Adrenal gland (tissue), 19 donors: ENCODE measurements at regions of chr4 and their contacts with region 1.

Region 1: GRCh38 chr4:73258686-73259570 is at the start of gene ANKRD17:
- DNase-seq: peak; percentile 92 to 97 (median 95)
- H3K4me3 ChIP-seq: peak within 1 kb of the TSS; percentile 38 to 98 (median 85)
- H3K27ac ChIP-seq: peak within 1 kb of the TSS; percentile 97 to 99 (median 99)
- H3K4me1 ChIP-seq: peaks cover 24 to 40% of the 10 kb centered on the region in 2 donors
- H3K27me3 ChIP-seq: no peaks in the 10 kb centered on the region
- CTCF ChIP-seq: peak in 5 of 6 experiments; percentile 21 to 57 (median 50)
- POLR2A ChIP-seq: peak; percentile 81 to 94
- total RNA-seq, gene ANKRD17: 37.7 to 66.3 (median 52.8) TPM

Region 2: GRCh38 chr4:73069338-73070073 is 189.4 kb before region 1 on chr4 and contains the start of gene COX18:
- intact Hi-C with region 1: loop called (anchors 10 kb)
- DNase-seq: peak; percentile 97 to 99 (median 98)
- H3K4me3 ChIP-seq: peak within 1 kb of the TSS; percentile 62 to 92 (median 84)
- H3K27ac ChIP-seq: peak within 1 kb of the TSS; percentile 95 to 100 (median 97)
- H3K4me1 ChIP-seq: peaks cover 7 to 15% of the 10 kb centered on the region in 2 donors
- H3K27me3 ChIP-seq: no peaks in the 10 kb centered on the region
- CTCF ChIP-seq: peak in 2 of 6 experiments; percentile 27
- POLR2A ChIP-seq: peak; percentile 87 to 98
- total RNA-seq, gene COX18: 25.3 to 59.5 (median 32.0) TPM

Region 3: DNA sequence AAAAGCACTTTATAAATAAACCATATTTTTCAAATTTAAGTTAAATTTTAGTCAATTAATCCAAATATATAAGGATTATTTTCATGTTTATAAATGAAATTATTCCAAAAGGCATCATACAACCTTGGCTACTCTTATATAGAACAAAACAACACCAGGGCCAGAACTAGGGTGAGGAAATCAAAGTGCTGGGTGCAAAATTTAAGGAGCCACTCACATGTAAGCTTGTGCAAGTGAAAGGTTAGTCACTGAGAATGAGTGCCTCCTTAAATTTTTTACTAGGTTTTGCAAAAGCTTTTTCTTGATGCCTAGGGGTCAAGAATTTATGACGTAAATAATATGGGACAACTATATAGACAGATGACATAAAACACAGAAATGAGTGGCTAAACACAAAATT is 106.0 kb before region 1 on chr4:
- intact Hi-C with region 1: loop called in 1 of 2 experiments (anchors 10 kb)
- DNase-seq: no peak
- H3K4me3 ChIP-seq: no peak overlapping the region
- H3K27ac ChIP-seq: no peak overlapping the region
- H3K4me1 ChIP-seq: no peaks in the 10 kb centered on the region
- H3K27me3 ChIP-seq: no peaks in the 10 kb centered on the region
- CTCF ChIP-seq: no peak
- POLR2A ChIP-seq: no peak